Right cardiac atrium (tissue), 5 donors: ENCODE measurements at regions of chr17 and their contacts with region 1.

Region 1: GRCh38 chr17:59914274-59914854 is 21.4 kb downstream of the RPS6KB1 start:
- DNase-seq: no peak
- ATAC-seq: no peak
- H3K4me3 ChIP-seq: no peak overlapping the region
- H3K27ac ChIP-seq: no peak overlapping the region
- H3K4me1 ChIP-seq: no peaks in the 10 kb centered on the region
- H3K27me3 ChIP-seq: no peaks in the 10 kb centered on the region

Region 2: DNA sequence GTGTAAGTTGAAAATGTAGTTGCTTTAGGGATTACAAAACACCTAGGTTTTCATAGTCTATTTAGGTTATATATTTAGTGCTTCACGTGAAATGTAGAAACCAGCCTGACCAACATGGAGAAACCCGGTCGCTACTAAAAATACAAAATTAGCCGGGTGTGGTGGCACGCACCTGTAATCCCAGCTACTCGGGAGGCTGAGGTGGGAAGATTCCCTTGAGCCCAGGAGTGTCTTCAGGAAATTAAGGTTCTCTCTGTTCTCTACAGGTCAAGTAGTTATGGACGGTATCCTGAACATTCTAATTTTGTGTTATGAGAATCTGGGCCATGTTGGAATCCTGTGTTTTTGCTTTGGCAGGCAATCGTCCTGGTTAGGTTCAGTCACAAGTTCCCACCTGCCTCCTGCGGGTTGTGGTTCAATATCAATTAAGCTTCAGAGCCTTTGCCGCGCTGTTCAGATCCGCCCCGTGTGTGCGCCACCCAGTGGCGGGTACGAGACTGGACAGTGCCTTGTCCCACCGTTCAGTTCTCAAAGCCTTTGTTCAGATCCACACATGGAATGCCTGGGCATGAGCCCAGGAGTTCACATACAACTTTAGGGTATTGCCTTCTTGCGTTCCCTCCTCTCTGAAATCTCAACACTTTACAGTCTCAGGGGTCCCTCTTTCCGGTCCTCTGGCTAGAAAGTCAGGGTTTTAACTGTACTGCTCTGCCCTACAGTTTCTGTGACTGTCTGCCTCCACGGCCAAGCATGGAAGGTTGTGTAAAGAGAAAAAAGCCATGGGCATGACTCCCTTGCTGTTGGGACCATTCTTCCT is 122.6 kb after region 1 on chr17:
- intact Hi-C with region 1: loop called in 2 of 4 experiments (anchors 10 kb)
- DNase-seq: peak; percentile 66 to 80 (median 67)
- ATAC-seq: peak; percentile 83 to 91
- H3K4me3 ChIP-seq: no peak overlapping the region
- H3K27ac ChIP-seq: no peak overlapping the region
- H3K4me1 ChIP-seq: no peaks in the 10 kb centered on the region
- H3K27me3 ChIP-seq: no peaks in the 10 kb centered on the region